ENCODE measurements at regions of chr15 and their contacts with region 1.

Region 1: GRCh38 chr15:78618490-78618934 is 2.3 kb downstream of the CHRNA3 start:
- DNase-seq: peak; percentile 71 to 91 (median 83)
- ATAC-seq: peak; percentile 84 to 93 (median 86)
- H3K4me3 ChIP-seq: no peak overlapping the region
- H3K27ac ChIP-seq: no peak overlapping the region
- H3K4me1 ChIP-seq: peaks cover 0 to 5% (median 0%) of the 10 kb centered on the region in 3 donors
- H3K27me3 ChIP-seq: peaks cover 0 to 11% (median 2%) of the 10 kb centered on the region in 4 donors
- CTCF ChIP-seq: peak; percentile 83 to 89 (median 86)

Region 2: DNA sequence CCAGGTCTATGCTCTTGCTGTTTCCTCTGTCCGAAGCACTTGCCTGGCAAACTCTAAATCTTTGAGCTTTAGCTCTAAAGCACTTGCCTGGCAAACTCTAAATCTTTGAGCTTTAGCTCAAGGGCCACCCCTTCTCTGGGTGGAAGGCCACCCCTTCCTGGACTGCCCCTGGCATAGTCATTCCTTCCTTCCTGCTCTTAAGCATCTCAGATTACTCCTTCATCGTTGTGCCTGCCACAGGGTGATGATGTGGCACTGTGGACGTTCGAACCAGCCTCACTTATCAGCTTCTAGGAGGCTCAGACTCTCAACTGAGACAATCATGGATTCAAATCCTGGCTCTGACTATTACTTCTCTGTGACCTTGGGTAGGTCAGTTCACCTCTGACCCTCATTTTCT is 288.9 kb before region 1 on chr15:
- intact Hi-C with region 1: no loop called
- DNase-seq: no peak
- ATAC-seq: no peak
- H3K4me3 ChIP-seq: no peak overlapping the region
- H3K27ac ChIP-seq: no peak overlapping the region
- H3K4me1 ChIP-seq: no peaks in the 10 kb centered on the region
- H3K27me3 ChIP-seq: no peaks in the 10 kb centered on the region
- CTCF ChIP-seq: no peak

Region 3: GRCh38 chr15:78709263-78709882 is 90.9 kb after region 1 on chr15:
- intact Hi-C with region 1: loop called in 2 of 3 experiments (anchors 5 kb)
- DNase-seq: peak; percentile 50 to 90 (median 72)
- ATAC-seq: peak; percentile 96 to 100 (median 100)
- H3K4me3 ChIP-seq: no peak overlapping the region
- H3K27ac ChIP-seq: no peak overlapping the region
- H3K4me1 ChIP-seq: peaks cover 0 to 3% (median 0%) of the 10 kb centered on the region in 3 donors
- H3K27me3 ChIP-seq: no peaks in the 10 kb centered on the region
- CTCF ChIP-seq: peak; percentile 76 to 92 (median 81)

Region 4: GRCh38 chr15:78750566-78750965 is 132.1 kb after region 1 on chr15:
- intact Hi-C with region 1: loop called in 2 of 3 experiments (anchors 5 to 10 kb)
- DNase-seq: peak in 2 of 6 donors; percentile 21 to 41
- ATAC-seq: peak; percentile 49 to 69 (median 52)
- H3K4me3 ChIP-seq: peak overlapping the region in 1 of 4 donors; percentile 17
- H3K27ac ChIP-seq: no peak overlapping the region
- H3K4me1 ChIP-seq: no peaks in the 10 kb centered on the region
- H3K27me3 ChIP-seq: no peaks in the 10 kb centered on the region
- CTCF ChIP-seq: no peak